Common myeloid progenitor, CD34-positive (primary cell): ENCODE measurements at regions of chr1 and their contacts with region 1.

Region 1: GRCh38 chr1:206725109-206725963 is 40.6 kb downstream of the MAPKAPK2 start:
- DNase-seq: peak; percentile 57 to 79 (median 76)
- H3K4me3 ChIP-seq: no peak overlapping the region
- H3K27ac ChIP-seq: no peak overlapping the region
- H3K4me1 ChIP-seq: peaks cover 24 to 62% (median 50%) of the 10 kb centered on the region in 4 experiments
- H3K27me3 ChIP-seq: no peaks in the 10 kb centered on the region

Region 2: DNA sequence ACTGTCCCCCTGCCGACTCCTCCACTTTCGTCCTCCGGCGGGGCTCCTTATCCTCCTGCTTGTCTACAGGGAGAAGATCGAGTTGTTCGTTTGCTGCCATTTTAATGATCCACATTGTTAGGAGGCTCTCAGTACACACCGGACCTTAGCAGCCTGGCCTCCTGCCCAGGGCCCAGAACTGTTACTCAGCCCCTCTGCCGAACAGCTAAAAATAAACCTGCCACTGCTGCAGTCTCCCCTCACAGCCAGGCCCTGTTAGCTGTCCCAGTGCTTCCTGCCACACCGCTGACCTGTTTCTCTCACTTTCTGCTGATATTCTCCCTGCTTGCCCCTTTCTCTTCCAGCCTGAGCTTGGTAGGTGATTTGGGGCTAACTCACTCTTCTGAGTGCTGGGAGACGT is 32.3 kb before region 1 on chr1:
- CTCF ChIA-PET with region 1: interaction called, 12 read pairs
- POLR2A ChIA-PET with region 1: interaction called, 3 read pairs
- DNase-seq: no peak
- H3K4me3 ChIP-seq: peak overlapping the region in 3 of 7 experiments; percentile 11 to 40 (median 33)
- H3K27ac ChIP-seq: peak overlapping the region in 1 of 2 experiments; percentile 31
- H3K4me1 ChIP-seq: peaks cover 0 to 42% (median 32%) of the 10 kb centered on the region in 4 experiments
- H3K27me3 ChIP-seq: no peaks in the 10 kb centered on the region

Region 3: DNA sequence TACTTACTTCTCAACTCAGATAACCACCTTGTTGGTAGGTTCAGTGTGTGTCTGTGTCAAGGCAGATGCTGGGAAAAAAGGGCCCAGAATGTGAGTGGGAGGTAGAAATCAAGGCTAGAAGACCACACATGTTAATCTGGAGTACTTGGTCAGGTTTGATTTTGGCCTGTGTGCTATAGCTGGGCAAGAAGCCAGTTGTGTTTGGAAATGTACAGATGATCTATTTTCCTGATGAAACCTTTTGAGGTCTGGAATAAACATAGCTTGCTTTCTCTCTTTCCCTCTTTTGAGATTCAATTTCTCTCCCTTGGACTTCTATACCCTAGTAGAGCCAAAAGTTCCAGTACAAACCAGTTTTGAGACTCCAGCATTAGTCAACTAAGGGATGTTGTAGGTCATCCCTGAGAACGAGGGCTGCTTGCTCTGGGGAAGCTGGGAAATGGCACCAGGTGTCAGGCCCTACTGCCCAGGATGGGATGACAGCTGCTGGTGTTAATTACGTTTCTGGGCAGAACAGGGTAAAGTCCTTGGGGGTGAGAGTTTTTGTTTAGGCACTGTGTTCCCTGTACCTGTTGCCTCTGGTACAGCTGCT is 24.8 kb before region 1 on chr1:
- CTCF ChIA-PET with region 1: interaction called, 11 read pairs
- POLR2A ChIA-PET with region 1: interaction called, 5 read pairs
- DNase-seq: no peak
- H3K4me3 ChIP-seq: no peak overlapping the region
- H3K27ac ChIP-seq: no peak overlapping the region
- H3K4me1 ChIP-seq: peaks cover 15 to 47% (median 27%) of the 10 kb centered on the region in 4 experiments
- H3K27me3 ChIP-seq: no peaks in the 10 kb centered on the region

Region 4: DNA sequence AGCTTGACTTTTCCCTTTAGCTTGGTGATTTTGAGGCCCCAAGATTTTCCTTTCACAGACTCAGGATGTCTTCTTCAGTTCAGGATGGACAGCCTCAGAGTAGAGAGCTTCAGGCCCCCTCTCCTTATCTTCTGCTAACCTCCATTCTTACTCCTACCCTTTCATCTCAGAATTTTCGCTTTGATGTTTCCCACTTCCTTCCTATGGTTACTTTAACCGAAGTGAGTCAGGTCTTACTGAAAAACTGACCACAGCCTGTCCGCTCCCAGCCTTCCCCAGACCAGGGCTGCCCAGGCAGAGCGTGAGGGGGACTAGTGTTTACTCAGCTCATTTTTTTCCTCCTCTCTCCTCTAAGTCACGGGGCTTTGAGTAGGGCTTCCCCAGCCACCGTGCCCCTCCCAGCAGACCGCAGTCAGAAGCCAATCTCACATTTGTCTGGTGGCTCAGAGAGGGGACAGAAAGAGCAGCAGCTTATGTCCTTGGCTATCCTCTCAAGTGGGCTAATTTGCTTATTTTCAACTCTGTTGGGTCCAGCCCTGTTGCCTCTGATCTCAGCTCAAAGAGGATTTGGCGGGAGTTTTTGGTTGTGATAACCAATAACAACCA is 41.0 kb after region 1 on chr1:
- CTCF ChIA-PET with region 1: interaction called, 11 read pairs
- POLR2A ChIA-PET with region 1: interaction called, 3 read pairs
- DNase-seq: peak; percentile 67 to 85 (median 82)
- H3K4me3 ChIP-seq: peak overlapping the region in 3 of 7 experiments; percentile 36 to 52 (median 39)
- H3K27ac ChIP-seq: no peak overlapping the region
- H3K4me1 ChIP-seq: peaks cover 7 to 62% (median 39%) of the 10 kb centered on the region in 4 experiments
- H3K27me3 ChIP-seq: no peaks in the 10 kb centered on the region

Region 5: GRCh38 chr1:206797534-206798383 is 72.4 kb after region 1 on chr1:
- CTCF ChIA-PET with region 1: interaction called, 250 read pairs
- POLR2A ChIA-PET with region 1: no interaction called
- DNase-seq: peak; percentile 42 to 72 (median 60)
- H3K4me3 ChIP-seq: no peak overlapping the region
- H3K27ac ChIP-seq: no peak overlapping the region
- H3K4me1 ChIP-seq: peaks cover 0 to 13% (median under 1%) of the 10 kb centered on the region in 4 experiments
- H3K27me3 ChIP-seq: no peaks in the 10 kb centered on the region